ENCODE measurements at regions of chr18 and their contacts with region 1.

Region 1: GRCh38 chr18:22169007-22169864 is at the start of gene GATA6:
- DNase-seq: peak; percentile 96 to 98
- H3K4me3 ChIP-seq: peak within 1 kb of the TSS; percentile 93 to 98
- H3K27ac ChIP-seq: peak within 1 kb of the TSS; percentile 97 to 100
- H3K4me1 ChIP-seq: peaks cover 0 to 46% (median 17%) of the 10 kb centered on the region in 4 donors
- H3K27me3 ChIP-seq: peaks cover 0 to 14% of the 10 kb centered on the region in 2 donors
- CTCF ChIP-seq: peak in 1 of 2 experiments; percentile 25

Region 2: GRCh38 chr18:22188559-22189267 is 19.5 kb after region 1 on chr18:
- intact Hi-C with region 1: loop called (anchors 2 kb)
- DNase-seq: peak in 1 of 2 donors; percentile 71
- H3K4me3 ChIP-seq: no peak overlapping the region
- H3K27ac ChIP-seq: peak overlapping the region; percentile 69 to 76
- H3K4me1 ChIP-seq: peaks cover 0 to 96% (median 62%) of the 10 kb centered on the region in 4 donors
- H3K27me3 ChIP-seq: no peaks in the 10 kb centered on the region
- CTCF ChIP-seq: no peak

Region 3: DNA sequence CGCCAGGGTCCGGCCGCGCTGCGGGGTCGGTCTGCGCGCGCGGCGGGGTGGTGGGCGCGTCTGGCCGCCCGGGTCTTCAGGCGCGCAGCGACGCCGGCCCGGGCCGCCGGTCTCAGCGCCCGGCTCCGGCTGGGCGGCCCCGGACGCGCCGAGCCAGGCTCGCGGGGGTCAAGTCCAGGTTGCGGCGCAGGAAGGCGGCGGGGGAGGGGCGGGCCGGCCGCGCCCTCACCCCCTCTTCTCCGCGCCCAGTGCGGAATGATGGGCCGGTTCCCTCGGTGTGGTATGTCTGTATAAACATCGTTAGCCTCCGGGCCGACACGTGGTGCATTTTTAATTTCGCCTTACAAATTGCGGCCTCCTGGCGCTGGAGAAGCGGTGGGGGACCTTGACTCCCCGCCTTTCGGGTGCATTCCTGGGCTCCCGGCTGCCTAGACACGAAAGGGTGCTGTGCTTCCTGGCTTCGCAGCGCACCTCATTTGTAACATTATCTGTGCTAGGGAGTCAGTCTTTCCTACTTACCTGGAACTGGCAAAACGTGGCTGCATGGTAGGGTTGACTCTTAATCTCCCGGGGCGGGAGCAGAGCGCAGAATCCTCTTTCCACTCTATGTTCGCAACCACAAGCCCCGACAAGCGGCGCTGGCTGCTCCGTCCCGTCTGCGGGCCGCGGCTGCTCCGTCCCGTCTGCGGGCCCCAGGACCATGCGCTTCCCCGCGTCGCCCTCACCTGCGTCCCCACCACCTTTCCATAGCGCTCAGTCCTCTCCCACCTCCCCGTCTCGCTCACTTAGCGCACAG is 179.5 kb after region 1 on chr18:
- intact Hi-C with region 1: loop called (anchors 5 kb)
- DNase-seq: peak; percentile 70 to 84
- H3K4me3 ChIP-seq: peak overlapping the region; percentile 58 to 77
- H3K27ac ChIP-seq: peak overlapping the region; percentile 85 to 92
- H3K4me1 ChIP-seq: peaks cover 0 to 41% (median 18%) of the 10 kb centered on the region in 4 donors
- H3K27me3 ChIP-seq: no peaks in the 10 kb centered on the region
- CTCF ChIP-seq: no peak

Region 4: DNA sequence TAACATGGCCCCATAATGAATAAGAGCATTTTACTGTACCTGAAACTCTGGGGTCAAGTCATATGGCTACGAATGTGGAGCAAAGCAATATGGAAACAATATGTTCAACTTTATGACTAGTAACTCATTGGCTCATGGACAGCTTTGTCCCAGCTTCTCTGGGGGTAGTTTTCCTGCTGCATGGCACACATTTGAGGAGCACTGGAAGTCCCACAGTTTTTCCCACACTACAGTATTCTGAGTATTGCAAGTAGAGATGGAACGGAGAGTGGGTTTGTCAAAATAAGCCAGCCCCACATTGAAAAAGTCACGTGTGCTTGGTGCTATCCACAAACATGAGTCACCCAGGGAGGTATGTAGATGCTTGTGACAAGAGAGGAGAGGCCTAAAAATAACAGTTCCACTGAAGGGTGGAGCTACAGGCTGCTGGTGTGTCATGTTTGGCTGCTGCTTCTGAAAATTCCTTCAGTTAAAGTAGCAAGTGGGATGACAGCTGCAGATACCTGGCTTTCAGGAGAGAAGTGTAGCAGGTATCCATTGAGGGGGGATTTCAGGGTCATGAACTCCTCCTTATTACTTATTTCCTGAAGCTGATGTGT is 296.7 kb after region 1 on chr18:
- intact Hi-C with region 1: loop called (anchors 10 kb)
- DNase-seq: peak; percentile 75 to 85
- H3K4me3 ChIP-seq: peak overlapping the region in 1 of 2 donors; percentile 3
- H3K27ac ChIP-seq: peak overlapping the region; percentile 78 to 84
- H3K4me1 ChIP-seq: peaks cover 0 to 56% (median 38%) of the 10 kb centered on the region in 4 donors
- H3K27me3 ChIP-seq: no peaks in the 10 kb centered on the region
- CTCF ChIP-seq: no peak

Measured in tibial artery (tissue), 4 donors.